ENCODE measurements at regions of chr17 and their contacts with region 1.

Region 1: DNA sequence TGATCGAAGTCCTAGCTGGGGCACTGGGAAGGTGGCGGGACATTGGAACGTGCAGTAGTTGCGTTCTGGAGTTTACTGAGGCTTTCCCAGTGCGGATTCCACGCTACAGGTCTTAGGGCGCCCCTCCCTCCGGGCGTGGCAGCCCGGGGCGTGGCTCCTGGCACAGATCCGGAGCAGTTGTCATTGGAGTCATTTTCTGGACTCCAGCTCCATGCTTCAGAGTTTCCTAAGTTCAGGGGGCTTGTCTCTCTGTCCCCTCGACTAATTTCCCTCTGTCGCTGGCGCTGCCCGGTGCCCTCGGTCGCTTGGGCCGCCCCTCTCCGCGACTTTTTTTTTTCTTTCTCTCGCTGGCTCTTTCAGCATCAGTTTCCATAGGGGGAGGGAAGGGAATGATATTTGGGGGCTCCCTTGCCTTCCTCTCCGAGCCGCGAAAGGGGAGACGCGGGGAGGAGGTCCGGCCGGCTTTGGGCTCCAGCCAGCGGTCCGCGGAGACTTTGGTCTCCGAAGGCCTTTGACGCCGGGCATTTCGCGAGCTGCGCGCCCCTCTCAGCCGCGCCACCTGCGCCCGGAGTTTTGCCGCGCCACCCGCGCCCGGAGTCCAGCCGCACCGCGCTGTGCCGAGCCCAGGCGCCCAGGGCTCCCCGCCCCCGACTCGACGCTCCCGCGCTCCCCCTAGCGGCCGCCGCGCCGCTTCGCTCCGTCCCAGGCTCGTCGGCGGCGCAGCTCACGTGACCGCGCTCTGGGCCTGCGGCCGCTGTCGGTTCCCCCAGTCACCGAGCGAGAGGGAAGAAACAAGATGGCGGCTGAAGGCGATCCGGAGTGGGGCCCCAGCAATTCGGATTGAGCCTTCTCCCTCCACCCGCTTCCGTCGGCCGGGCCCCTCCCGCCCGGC is at the start of gene BPTF:
- DNase-seq: peak; percentile 95 to 98
- ATAC-seq: peak; percentile 98
- H3K4me3 ChIP-seq: peak within 1 kb of the TSS; percentile 49 to 82
- H3K27ac ChIP-seq: peak within 1 kb of the TSS; percentile 69 to 72
- H3K4me1 ChIP-seq: peaks cover 0 to 3% of the 10 kb centered on the region in 2 donors
- H3K27me3 ChIP-seq: no peaks in the 10 kb centered on the region
- total RNA-seq, gene BPTF: 82.3 to 121 TPM

Region 2: GRCh38 chr17:67717624-67718329 is 107.2 kb before region 1 on chr17 and contains the start of gene NOL11:
- intact Hi-C with region 1: loop called in 1 of 2 experiments (anchors 5 kb)
- DNase-seq: peak; percentile 99 to 100
- ATAC-seq: peak; percentile 100
- H3K4me3 ChIP-seq: peak within 1 kb of the TSS; percentile 67 to 82
- H3K27ac ChIP-seq: peak within 1 kb of the TSS; percentile 58 to 60
- H3K4me1 ChIP-seq: peaks cover 1 to 3% of the 10 kb centered on the region in 2 donors
- H3K27me3 ChIP-seq: no peaks in the 10 kb centered on the region
- total RNA-seq, gene NOL11: 27.5 to 32.0 TPM

Region 3: DNA sequence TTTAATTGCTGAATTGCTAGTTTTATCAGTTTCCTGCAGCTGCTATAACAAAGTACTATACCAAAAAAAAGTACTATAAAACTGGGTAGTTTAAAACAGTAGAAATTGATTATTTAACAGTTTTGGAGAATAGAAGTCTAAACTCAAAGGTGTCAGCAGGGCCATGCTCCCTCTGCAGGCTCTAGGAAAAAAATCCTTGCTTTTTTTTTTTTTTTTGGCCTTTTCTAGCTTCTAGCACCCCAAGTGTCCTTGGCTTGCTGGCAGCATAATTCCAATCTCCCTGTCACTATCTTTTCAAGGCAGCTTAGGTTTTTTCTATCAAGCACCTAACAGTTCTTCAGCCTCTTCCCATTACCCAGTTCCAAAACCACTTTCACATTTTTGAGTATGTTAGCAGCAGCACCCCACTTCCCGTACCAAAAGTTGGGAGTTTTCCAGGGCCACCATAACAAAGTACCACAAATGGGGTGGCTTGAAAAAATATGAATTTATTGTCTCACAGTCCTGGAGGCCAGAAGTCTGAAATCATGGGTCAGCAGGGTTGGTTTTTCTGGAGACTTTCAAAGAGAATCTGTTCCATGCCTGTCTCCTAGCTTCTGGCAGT is 37.7 kb after region 1 on chr17:
- intact Hi-C with region 1: no loop called
- DNase-seq: no peak
- ATAC-seq: no peak
- H3K4me3 ChIP-seq: no peak overlapping the region
- H3K27ac ChIP-seq: no peak overlapping the region
- H3K4me1 ChIP-seq: peaks cover 3% of the 10 kb centered on the region in 2 donors
- H3K27me3 ChIP-seq: no peaks in the 10 kb centered on the region